ENCODE measurements at regions of chr11 and their contacts with region 1.

Region 1: GRCh38 chr11:102495161-102496042 is 35.1 kb downstream of the MMP7 start:
- DNase-seq: peak; percentile 77
- H3K4me3 ChIP-seq: no peak overlapping the region
- H3K27ac ChIP-seq: no peak overlapping the region
- H3K4me1 ChIP-seq: peaks cover 13% of the 10 kb centered on the region
- H3K27me3 ChIP-seq: no peaks in the 10 kb centered on the region
- CTCF ChIP-seq: peak; percentile 30 to 51
- POLR2A ChIP-seq: no peak

Region 2: GRCh38 chr11:101996111-101996510 is 499.3 kb before region 1 on chr11:
- CTCF ChIA-PET with region 1: no interaction called
- POLR2A ChIA-PET with region 1: no interaction called
- dilution Hi-C with region 1: no loop called
- intact Hi-C with region 1: no loop called
- DNase-seq: no peak
- H3K4me3 ChIP-seq: no peak overlapping the region
- H3K27ac ChIP-seq: no peak overlapping the region
- H3K4me1 ChIP-seq: no peaks in the 10 kb centered on the region
- H3K27me3 ChIP-seq: no peaks in the 10 kb centered on the region
- CTCF ChIP-seq: no peak
- POLR2A ChIP-seq: no peak

Region 3: DNA sequence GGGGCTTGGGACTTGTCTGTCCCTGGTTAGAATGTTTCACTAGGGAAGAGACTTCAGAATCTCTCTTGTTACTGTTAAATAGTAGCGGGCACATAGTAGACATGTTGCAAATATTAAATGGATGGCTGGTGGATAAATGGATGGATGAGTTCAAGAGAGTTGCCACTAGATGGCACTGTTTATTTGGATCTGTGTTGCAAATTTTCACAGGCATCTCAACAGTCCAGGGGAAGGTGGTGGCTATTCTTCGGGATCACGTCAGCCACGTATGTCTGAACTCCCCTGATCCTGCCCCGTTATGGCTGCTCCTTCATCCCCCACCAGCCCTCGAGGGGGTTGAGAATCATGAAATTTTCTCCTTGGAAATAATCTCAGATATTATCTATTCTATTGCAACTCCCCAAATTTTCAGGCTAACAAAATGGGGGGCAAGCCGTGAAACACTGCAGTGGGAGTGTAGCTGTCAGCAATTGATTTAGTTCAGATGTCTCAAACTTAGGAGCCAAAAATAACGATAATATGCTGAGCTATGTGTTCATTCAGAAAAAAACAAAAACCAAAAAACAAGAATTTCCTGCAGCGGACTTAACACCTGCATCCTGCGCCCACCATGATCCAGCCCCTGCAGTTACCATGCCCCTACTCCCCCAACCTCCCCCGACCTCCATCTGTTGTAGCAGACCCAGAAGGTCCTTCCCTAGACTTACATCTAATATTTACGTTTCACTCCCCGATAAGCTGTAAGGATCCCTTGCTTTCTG is 207.3 kb before region 1 on chr11:
- CTCF ChIA-PET with region 1: interaction called, 8 read pairs
- POLR2A ChIA-PET with region 1: no interaction called
- dilution Hi-C with region 1: no loop called
- intact Hi-C with region 1: loop called (anchors 1 kb)
- DNase-seq: peak; percentile 66
- H3K4me3 ChIP-seq: no peak overlapping the region
- H3K27ac ChIP-seq: no peak overlapping the region
- H3K4me1 ChIP-seq: no peaks in the 10 kb centered on the region
- H3K27me3 ChIP-seq: no peaks in the 10 kb centered on the region
- CTCF ChIP-seq: peak; percentile 55 to 65
- POLR2A ChIP-seq: no peak

Region 4: GRCh38 chr11:102293873-102294601 is 201.4 kb before region 1 on chr11:
- CTCF ChIA-PET with region 1: interaction called, 14 read pairs
- POLR2A ChIA-PET with region 1: no interaction called
- dilution Hi-C with region 1: no loop called
- intact Hi-C with region 1: loop called (anchors 1 kb)
- DNase-seq: peak; percentile 50
- H3K4me3 ChIP-seq: no peak overlapping the region
- H3K27ac ChIP-seq: no peak overlapping the region
- H3K4me1 ChIP-seq: no peaks in the 10 kb centered on the region
- H3K27me3 ChIP-seq: no peaks in the 10 kb centered on the region
- CTCF ChIP-seq: peak; percentile 41 to 61
- POLR2A ChIP-seq: no peak

Region 5: GRCh38 chr11:102367364-102367763 is 128.0 kb before region 1 on chr11:
- CTCF ChIA-PET with region 1: interaction called, 55 read pairs
- POLR2A ChIA-PET with region 1: no interaction called
- dilution Hi-C with region 1: no loop called
- intact Hi-C with region 1: loop called (anchors 1 kb)
- DNase-seq: peak; percentile 66
- H3K4me3 ChIP-seq: no peak overlapping the region
- H3K27ac ChIP-seq: no peak overlapping the region
- H3K4me1 ChIP-seq: peaks cover 9% of the 10 kb centered on the region
- H3K27me3 ChIP-seq: no peaks in the 10 kb centered on the region
- CTCF ChIP-seq: no peak
- POLR2A ChIP-seq: no peak

Region 6: GRCh38 chr11:102390667-102391465 is 104.5 kb before region 1 on chr11:
- CTCF ChIA-PET with region 1: interaction called, 41 read pairs
- POLR2A ChIA-PET with region 1: no interaction called
- dilution Hi-C with region 1: no loop called
- intact Hi-C with region 1: loop called (anchors 1 kb)
- DNase-seq: peak; percentile 63
- H3K4me3 ChIP-seq: no peak overlapping the region
- H3K27ac ChIP-seq: no peak overlapping the region
- H3K4me1 ChIP-seq: peaks cover under 1% of the 10 kb centered on the region
- H3K27me3 ChIP-seq: no peaks in the 10 kb centered on the region
- CTCF ChIP-seq: peak; percentile 83 to 88
- POLR2A ChIP-seq: no peak

Measured in endothelial cell of umbilical vein (primary cell).